ENCODE measurements at regions of chr1 and their contacts with region 1.

Region 1: DNA sequence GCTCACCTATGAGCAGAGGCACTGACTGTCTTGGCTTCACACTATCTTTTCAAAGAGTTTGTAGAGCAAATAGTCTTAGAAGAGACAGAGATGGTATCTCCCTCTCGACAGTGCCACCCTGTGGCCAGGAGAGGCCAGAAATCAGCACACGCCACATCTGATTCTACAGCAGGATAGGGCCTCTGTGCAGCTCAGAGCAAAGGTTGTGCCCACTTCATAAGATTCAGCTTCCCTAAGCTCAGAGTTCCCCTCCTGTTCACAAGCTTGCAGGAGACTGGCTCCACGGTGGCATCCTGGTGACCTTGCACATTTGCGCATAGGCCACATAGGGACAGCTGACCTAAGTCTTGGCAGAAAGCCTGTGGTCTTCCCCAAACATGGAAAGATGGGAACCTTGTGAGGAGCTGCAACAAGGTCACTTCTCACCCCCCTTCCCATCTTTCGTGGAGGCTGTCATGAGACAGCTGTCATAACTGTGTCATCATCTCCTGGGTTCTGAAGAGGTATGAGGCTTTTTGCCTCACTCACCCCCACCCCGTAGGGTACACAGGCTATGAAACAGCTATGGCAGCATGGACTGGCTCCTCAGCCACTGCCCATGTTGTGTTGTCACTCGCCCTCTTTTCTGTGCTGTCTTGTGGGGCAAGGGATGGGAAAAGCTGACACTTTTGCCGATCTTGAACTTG is 3.0 kb downstream of the ITLN2 start:
- H3K4me3 ChIP-seq: no peak overlapping the region
- H3K27ac ChIP-seq: no peak overlapping the region
- H3K4me1 ChIP-seq: no peaks in the 10 kb centered on the region
- CTCF ChIP-seq: peak; percentile 58

Region 2: DNA sequence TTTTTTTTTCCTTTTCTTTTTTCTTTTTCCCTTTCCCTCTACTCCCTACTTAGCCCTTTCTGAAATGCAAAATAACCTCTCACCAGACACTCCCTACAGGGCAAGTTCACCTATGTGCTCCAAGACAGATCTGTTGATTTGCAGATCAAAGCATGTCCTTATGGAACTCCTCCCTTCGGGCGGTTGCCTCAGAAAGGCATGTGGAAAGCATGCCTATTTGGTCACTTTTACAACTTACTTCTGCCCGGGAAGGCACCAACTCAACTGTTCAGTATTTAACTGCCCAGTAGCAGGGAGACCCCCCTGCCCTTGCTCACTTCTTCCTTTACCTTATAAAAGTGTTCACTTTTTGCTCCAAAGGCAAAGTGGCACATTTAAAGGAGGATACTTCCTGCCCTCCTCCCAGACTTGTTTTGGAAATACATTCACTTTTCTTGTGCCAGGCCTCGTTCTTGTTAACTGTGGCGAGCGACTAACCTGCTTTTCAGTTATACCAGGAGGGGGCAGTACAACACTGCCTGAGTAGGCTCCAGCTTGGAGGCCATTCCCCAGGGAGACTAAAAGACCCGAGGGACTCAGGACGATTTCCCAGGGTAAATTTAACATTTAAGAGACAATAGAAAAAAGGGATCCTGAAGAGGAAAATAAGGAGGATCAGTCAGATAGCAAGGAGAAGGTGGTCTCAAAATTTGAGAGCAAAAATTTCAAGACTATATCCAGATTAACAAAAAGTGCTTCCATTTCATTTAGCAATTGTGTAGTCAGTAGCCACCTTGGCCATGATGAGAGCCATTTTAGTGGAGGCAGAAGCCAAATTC is 224.9 kb before region 1 on chr1:
- CTCF ChIA-PET with region 1: interaction called, 62 read pairs
- POLR2A ChIA-PET with region 1: no interaction called
- H3K4me3 ChIP-seq: no peak overlapping the region
- H3K27ac ChIP-seq: no peak overlapping the region
- H3K4me1 ChIP-seq: no peaks in the 10 kb centered on the region
- CTCF ChIP-seq: peak; percentile 68

Region 3: DNA sequence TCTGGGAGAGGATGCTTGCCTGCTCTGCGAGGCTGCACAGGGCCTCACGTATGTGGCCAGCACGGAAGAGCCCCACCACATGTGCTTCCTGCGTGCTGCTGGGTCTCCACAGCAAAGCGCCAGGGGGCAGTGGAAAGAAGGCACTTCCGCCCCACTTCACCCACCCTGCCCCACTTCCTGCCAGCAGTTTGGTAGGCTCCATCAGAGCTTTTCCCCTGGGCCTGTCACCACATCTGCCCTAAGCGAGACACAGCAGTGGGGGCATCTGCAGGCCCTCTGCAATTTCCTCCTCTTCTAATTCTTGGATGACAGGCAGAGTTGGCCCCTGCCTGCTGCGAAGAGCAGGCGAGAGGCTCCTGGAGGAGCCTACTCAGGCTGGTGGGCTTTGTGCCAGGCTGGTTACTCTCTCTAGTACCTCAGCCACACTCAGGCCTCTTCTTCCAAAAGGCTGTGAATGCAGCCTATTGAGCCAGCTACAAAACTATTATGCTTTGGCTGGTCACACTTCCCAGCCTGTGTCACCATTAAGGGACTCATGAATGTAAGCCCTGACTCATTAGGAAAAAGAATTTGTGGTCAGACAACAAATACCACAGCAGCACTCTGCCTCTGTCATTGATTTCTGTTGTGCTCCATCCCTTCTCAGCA is 113.9 kb before region 1 on chr1:
- CTCF ChIA-PET with region 1: interaction called, 132 read pairs
- POLR2A ChIA-PET with region 1: no interaction called
- H3K4me3 ChIP-seq: no peak overlapping the region
- H3K27ac ChIP-seq: no peak overlapping the region
- H3K4me1 ChIP-seq: no peaks in the 10 kb centered on the region
- CTCF ChIP-seq: no peak

Region 4: GRCh38 chr1:160868141-160868540 is 83.4 kb before region 1 on chr1:
- CTCF ChIA-PET with region 1: no interaction called
- POLR2A ChIA-PET with region 1: no interaction called
- H3K4me3 ChIP-seq: no peak overlapping the region
- H3K27ac ChIP-seq: no peak overlapping the region
- H3K4me1 ChIP-seq: no peaks in the 10 kb centered on the region
- CTCF ChIP-seq: no peak

Region 5: DNA sequence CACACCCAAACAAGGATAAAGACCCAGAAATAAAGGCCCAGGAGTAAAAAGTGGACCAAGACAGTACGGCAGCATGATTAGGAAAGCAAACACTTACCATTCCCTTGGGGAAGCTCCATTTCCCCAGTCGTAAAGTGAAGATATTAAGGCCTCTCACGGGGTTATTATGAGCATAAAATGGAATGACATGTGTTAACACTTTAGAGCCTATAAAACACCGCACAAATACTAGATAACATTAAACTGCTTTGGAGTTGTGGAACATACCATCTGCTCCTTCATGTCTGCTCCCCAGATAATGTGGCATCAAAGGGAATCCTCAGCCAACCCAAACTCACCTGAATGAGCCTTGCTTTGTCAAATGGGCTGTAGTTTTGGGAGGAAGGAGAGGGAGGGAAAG is 11.9 kb after region 1 on chr1:
- CTCF ChIA-PET with region 1: interaction called, 18 read pairs
- POLR2A ChIA-PET with region 1: no interaction called
- H3K4me3 ChIP-seq: no peak overlapping the region
- H3K27ac ChIP-seq: no peak overlapping the region
- H3K4me1 ChIP-seq: peaks cover 3% of the 10 kb centered on the region
- CTCF ChIP-seq: no peak